BJ (cell line): ENCODE measurements at regions of chr7 and their contacts with region 1.

Region 1: GRCh38 chr7:129926618-129927017 is 26.1 kb downstream of the UBE2H start:
- DNase-seq: no peak
- H3K4me3 ChIP-seq: no peak overlapping the region
- H3K27me3 ChIP-seq: no peaks in the 10 kb centered on the region
- CTCF ChIP-seq: no peak

Region 2: GRCh38 chr7:129072479-129073011 is 854.1 kb before region 1 on chr7:
- CTCF ChIA-PET with region 1: no interaction called
- POLR2A ChIA-PET with region 1: no interaction called
- DNase-seq: no peak
- H3K4me3 ChIP-seq: no peak overlapping the region
- H3K27me3 ChIP-seq: 0 out of 2 replicates have a peak, but pooled peaks cover 2% of the 10 kb centered on the region
- CTCF ChIP-seq: no peak

Region 3: DNA sequence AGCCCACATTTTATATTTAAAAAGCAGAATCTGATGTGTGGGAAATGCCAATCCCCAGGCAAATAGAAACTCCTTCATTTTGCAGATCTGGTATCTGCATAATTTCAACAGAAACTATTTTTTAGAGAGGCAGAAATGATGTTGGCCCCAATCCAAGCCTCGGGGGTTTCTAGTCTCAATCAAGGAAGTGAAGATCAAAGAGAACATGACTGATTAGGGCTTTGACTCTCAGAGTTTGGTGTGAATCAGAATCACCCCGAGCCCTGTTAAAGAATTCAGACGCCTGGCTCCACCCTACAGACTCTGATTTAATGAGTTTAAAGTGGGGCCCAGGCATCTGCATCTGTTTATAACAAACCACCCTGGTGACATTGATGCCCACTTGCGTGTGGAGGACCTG is 62.8 kb after region 1 on chr7:
- CTCF ChIA-PET with region 1: no interaction called
- POLR2A ChIA-PET with region 1: interaction called, 15 read pairs
- DNase-seq: no peak
- H3K4me3 ChIP-seq: no peak overlapping the region
- H3K27me3 ChIP-seq: no peaks in the 10 kb centered on the region
- CTCF ChIP-seq: no peak